ENCODE measurements at regions of chr2 and their contacts with region 1.

Region 1: DNA sequence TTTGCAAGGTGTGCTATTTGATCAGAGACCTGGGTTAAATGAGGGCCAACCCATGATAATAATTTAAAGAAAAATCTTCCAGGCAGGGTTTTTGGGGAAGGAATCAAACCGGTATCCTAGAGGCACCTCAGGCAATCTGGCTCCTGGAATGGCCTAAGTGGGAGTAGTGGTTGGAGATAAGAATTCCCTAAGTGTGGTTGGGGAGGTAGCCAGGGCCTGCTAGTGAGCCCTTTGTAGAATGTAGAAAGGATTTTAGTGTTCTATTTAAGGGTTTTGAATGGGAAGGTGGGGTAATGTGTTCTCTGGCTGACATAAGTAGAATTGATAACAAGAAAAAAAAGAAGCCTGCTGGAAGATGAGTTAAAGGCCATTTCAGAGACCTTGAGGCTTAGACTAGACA is 422.2 kb downstream of the XIRP2 start:
- DNase-seq: no peak
- ATAC-seq: no peak

Region 2: DNA sequence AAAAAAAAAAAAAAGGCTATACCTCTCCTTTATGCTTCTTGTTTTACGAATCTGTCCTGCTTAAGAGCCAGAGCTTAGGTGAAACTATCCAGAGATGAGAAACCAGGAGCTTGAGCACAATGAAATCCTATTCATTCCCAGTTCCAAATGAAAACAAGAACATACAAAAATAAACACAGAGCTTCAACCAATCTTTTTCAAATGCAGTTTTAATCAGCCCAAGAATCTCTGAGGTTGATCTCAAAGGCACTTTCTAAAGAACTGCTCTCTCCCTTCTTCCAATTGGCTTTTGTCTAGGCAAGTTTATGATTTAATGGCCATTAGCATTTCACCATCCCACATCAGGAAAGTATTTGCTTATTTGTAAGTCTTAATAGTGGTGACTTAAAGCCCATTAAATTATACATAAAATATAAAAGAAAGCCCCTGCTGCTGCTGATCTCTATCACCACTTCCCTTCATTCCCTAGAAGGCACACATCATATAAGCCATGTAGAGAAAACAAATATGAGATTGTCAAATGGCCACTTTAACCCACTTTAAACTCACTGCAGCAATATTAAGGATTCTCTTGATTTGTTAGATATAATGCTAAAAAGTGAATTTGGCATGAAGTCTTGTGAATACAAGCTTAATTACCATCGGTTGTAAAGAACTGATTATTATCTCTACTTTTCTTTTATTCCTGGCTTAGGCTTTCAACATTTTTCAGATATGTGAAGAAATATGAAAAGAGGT is 905.4 kb before region 1 on chr2:
- intact Hi-C with region 1: no loop called
- DNase-seq: no peak
- ATAC-seq: no peak

Region 3: DNA sequence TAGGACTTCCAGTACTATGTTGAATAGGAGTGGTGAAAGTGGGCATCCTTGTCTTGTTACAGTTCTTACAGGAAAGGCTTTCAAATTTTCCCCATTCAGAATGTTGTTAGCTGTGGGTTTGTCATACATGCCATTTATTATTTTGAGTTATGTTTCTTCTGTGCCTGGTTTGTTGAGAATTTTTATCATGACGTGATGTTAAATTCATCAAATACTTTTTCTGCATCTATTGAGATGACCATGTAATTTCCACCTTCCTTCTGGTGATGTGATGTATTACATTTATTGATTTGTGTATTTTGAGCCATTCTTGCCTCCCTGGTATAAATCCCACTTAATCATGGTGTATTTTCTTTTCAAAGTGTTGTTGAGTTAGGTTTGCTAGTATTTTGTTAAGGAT is 17.3 kb after region 1 on chr2:
- intact Hi-C with region 1: loop called in 1 of 2 experiments (anchors 2 kb)
- DNase-seq: no peak
- ATAC-seq: no peak

Measured in left cardiac atrium (tissue), 4 donors.